Right ventricle myocardium inferior (tissue), 1 donor: ENCODE measurements at regions of chr1 and their contacts with region 1.

Region 1: GRCh38 chr1:66764994-66765578 is 12.8 kb downstream of the DYNLT5 start:
- DNase-seq: no peak
- ATAC-seq: no peak

Region 2: DNA sequence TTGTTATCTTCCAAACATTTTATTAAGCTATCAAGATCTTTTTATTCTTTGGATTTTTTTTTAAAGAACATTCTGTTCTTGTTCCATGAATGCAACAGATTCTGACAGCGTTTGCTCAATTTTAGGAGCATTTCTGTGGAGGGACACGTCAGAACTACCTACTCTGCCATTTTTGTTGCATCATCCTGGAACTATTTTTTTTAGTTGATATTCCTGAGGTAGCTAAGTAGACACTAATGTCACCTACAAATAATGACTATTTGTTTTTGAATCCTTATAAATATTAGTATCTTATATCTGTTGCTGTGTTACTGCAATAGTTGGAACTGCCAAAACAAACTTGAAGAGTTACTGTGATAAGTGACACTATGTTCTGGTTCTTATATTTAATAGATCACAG is 102.4 kb after region 1 on chr1:
- intact Hi-C with region 1: no loop called
- DNase-seq: no peak
- ATAC-seq: no peak

Region 3: GRCh38 chr1:66996018-66996682 is 231.1 kb after region 1 on chr1:
- intact Hi-C with region 1: loop called (anchors 5 kb)
- DNase-seq: no peak
- ATAC-seq: peak; percentile 33

Region 4: GRCh38 chr1:67214420-67215174 is 449.5 kb after region 1 on chr1:
- intact Hi-C with region 1: loop called (anchors 5 kb)
- DNase-seq: no peak
- ATAC-seq: no peak